ENCODE measurements at regions of chr13 and their contacts with region 1.

Region 1: DNA sequence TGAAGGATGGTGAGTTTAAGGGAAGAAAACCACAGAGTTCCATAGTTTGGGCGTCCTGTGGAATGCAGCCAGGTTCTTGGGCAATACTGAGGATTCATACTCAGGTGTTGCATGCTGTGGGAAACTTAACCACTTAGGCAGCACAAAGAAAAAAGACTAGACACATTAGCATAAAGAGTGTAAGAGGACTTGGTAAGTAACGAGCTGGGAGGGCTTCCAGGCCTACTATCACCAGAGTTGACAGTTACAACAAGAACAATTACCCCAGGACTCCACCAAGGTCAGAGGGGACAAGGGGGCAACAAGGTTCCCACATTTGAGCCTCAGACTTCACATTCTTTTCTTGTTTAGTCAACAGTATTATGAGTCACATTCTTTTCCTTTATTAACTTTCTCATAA is 33.2 kb downstream of the KCTD12 start:
- DNase-seq: peak; percentile 92
- H3K4me3 ChIP-seq: no peak overlapping the region
- H3K27ac ChIP-seq: peak overlapping the region; percentile 86
- H3K4me1 ChIP-seq: peaks cover 41% of the 10 kb centered on the region
- H3K27me3 ChIP-seq: no peaks in the 10 kb centered on the region
- CTCF ChIP-seq: no peak

Region 2: DNA sequence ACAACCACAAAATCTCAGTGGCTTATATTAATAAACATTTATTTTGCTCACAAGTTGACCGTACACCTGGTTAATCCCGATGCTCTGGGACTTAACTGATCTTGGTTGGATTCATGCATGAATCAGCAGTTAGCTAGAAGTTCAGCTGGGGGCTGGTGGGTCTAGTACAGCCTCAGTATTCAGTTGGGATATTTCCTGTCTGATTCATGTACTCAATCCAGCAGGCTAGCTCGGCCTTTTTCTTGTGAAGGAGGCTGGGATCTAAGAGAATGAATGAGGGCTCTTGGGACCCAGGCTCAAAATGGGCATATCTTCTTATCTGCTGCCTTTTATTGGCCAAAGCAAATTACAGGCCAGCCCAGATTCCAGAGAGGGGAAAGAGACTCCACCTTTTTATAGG is 145.6 kb before region 1 on chr13:
- CTCF ChIA-PET with region 1: no interaction called
- dilution Hi-C with region 1: no loop called
- in situ Hi-C with region 1: no loop called
- intact Hi-C with region 1: no loop called
- DNase-seq: no peak
- H3K4me3 ChIP-seq: no peak overlapping the region
- H3K27ac ChIP-seq: no peak overlapping the region
- H3K4me1 ChIP-seq: peaks cover 8% of the 10 kb centered on the region
- H3K27me3 ChIP-seq: no peaks in the 10 kb centered on the region
- CTCF ChIP-seq: no peak

Region 3: DNA sequence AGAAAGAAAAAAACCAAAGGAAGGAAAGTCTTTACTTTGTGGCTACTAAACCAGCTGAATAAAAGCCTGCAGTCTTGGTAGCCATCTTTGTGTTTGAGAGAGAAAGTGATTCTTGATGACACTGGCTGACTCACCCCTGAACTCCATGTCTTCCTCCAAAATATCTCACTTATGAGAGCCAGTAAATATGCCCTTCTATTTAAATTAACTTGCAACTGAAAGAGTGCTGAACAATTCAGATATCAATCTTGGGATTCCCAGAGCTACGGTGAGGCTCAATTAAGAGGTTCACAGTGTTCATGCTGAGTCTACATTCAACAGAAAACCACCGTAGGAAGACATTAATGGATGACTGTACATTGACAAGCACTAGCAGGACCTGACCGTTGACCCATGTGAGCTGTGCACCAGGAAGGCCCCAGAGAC is 24.7 kb before region 1 on chr13:
- CTCF ChIA-PET with region 1: no interaction called
- dilution Hi-C with region 1: no loop called
- in situ Hi-C with region 1: no loop called
- intact Hi-C with region 1: loop called (anchors 2 kb)
- DNase-seq: peak; percentile 39
- H3K4me3 ChIP-seq: no peak overlapping the region
- H3K27ac ChIP-seq: no peak overlapping the region
- H3K4me1 ChIP-seq: peaks cover 10% of the 10 kb centered on the region
- H3K27me3 ChIP-seq: no peaks in the 10 kb centered on the region
- CTCF ChIP-seq: no peak

Measured in mammary epithelial cell (primary cell).